H1 (cell line): ENCODE measurements at regions of chr15 and their contacts with region 1.

Region 1: DNA sequence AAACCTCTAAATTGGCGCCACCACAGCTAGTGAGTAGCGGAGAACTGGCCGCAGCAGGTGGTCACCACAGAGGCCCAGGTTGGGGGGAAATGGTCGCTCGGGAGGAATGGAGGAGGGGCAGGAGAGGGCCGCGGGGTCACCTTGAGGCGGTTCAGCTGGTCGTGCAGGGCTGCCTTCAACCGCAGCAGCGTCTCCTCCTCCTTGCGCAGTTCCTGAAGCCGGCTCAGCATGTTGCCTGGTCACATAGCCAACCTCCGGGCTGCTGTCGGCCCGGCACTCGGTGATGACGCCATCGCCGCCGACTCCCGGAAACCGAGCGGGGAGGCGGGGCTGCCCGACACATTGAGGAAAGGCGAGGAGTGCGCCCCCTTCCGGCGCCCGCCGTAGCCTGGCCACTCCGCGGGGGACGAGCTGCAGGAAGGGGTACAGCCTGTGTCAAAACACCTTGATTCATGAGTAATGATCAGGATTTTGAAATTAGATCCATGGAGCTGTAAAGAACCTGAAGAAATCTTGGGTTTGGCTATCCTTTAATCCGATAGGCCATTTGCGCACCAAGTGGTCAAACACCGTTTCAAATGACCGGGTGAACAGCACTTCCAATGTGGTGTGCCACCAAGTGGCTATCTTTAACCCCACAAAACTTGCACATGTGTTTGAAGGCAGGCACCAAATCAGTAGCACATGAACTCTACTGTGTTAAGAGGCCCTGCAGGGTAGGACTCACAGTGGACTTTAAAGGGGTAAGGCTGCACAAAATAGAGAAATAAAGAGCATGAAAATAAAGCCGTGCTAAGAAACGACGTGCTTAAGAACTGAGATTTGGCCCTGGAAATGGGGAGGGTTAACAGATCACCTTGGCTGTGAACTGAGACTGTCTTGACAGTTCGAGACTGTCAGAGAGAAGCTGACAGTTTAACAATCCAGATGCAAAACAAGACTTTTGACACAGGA is at the start of gene SNAPC5:
- DNase-seq: peak; percentile 94 to 100
- H3K4me3 ChIP-seq: peak within 1 kb of the TSS; percentile 56 to 88 (median 67)
- H3K27ac ChIP-seq: peak within 1 kb of the TSS; percentile 88
- H3K4me1 ChIP-seq: peaks cover 5 to 8% (median 6%) of the 10 kb centered on the region in 4 experiments; a peak in 5 of 7 replicates
- H3K27me3 ChIP-seq: no peaks in the 10 kb centered on the region
- CTCF ChIP-seq: peak; percentile 78 to 93 (median 90)
- EP300 ChIP-seq: no peak; a peak in 1 of 3 replicates
- POLR2A ChIP-seq: peak; percentile 57 to 91
- RAD21 ChIP-seq: peak; percentile 29 to 56; a peak in 3 of 4 replicates
- total RNA-seq, gene SNAPC5: 21.5 and 23.1 TPM in 2 replicates

Region 2: GRCh38 chr15:66261056-66261455 is 236.7 kb before region 1 on chr15:
- CTCF ChIA-PET with region 1: no interaction called
- POLR2A ChIA-PET with region 1: no interaction called
- DNase-seq: no peak
- H3K4me3 ChIP-seq: no peak overlapping the region
- H3K27ac ChIP-seq: no peak overlapping the region
- H3K4me1 ChIP-seq: no peaks in the 10 kb centered on the region
- H3K27me3 ChIP-seq: peaks cover 2 to 12% (median 11%) of the 10 kb centered on the region in 4 experiments
- CTCF ChIP-seq: no peak
- EP300 ChIP-seq: no peak
- POLR2A ChIP-seq: no peak
- RAD21 ChIP-seq: no peak

Region 3: GRCh38 chr15:66293419-66294156 is 204.2 kb before region 1 on chr15 and contains the start of gene DIS3L:
- CTCF ChIA-PET with region 1: interaction called, 5 read pairs
- POLR2A ChIA-PET with region 1: interaction called, 20 read pairs
- DNase-seq: peak in 1 of 2 experiments; percentile 80
- H3K4me3 ChIP-seq: peak within 1 kb of the TSS; percentile 54 to 73 (median 60)
- H3K27ac ChIP-seq: peak within 1 kb of the TSS; percentile 65; the same call in 1 of the 2 replicates
- H3K4me1 ChIP-seq: peaks cover 6 to 12% (median 7%) of the 10 kb centered on the region in 4 experiments; a peak in 6 of 7 replicates
- H3K27me3 ChIP-seq: no peaks in the 10 kb centered on the region
- CTCF ChIP-seq: no peak
- EP300 ChIP-seq: no peak
- POLR2A ChIP-seq: peak in 1 of 2 experiments; percentile 69
- RAD21 ChIP-seq: no peak
- total RNA-seq, gene DIS3L: 25.0 and 31.2 TPM in 2 replicates

Region 4: GRCh38 chr15:66386204-66387123 is 111.3 kb before region 1 on chr15 and contains the start of gene MAP2K1:
- CTCF ChIA-PET with region 1: interaction called, 30 read pairs
- POLR2A ChIA-PET with region 1: interaction called, 58 read pairs
- DNase-seq: peak; percentile 85 to 98
- H3K4me3 ChIP-seq: peak within 1 kb of the TSS; percentile 51 to 96 (median 88)
- H3K27ac ChIP-seq: 0 out of 2 replicates have a peak within 1 kb of the TSS, but pooled peaks have one; percentile 6
- H3K4me1 ChIP-seq: peaks cover 0 to 3% (median 0%) of the 10 kb centered on the region in 4 experiments; a peak in 2 of 7 replicates
- H3K27me3 ChIP-seq: no peaks in the 10 kb centered on the region
- CTCF ChIP-seq: peak; percentile 54 to 77 (median 71)
- EP300 ChIP-seq: no peak
- POLR2A ChIP-seq: peak in 1 of 2 experiments; percentile 54; a peak in 1 of 3 replicates
- RAD21 ChIP-seq: peak; percentile 29 to 41
- total RNA-seq, gene MAP2K1: 70.4 and 78.2 TPM in 2 replicates

Region 5: GRCh38 chr15:66401130-66402021 is 96.4 kb before region 1 on chr15:
- CTCF ChIA-PET with region 1: interaction called, 28 read pairs
- POLR2A ChIA-PET with region 1: interaction called, 64 read pairs
- DNase-seq: no peak
- H3K4me3 ChIP-seq: no peak overlapping the region
- H3K27ac ChIP-seq: no peak overlapping the region
- H3K4me1 ChIP-seq: peaks cover 1 to 18% (median 14%) of the 10 kb centered on the region in 4 experiments; a peak in 6 of 7 replicates
- H3K27me3 ChIP-seq: no peaks in the 10 kb centered on the region
- CTCF ChIP-seq: peak; percentile 17 to 57 (median 30); a peak in 2 of 4 replicates
- EP300 ChIP-seq: no peak
- POLR2A ChIP-seq: no peak
- RAD21 ChIP-seq: peak; percentile 44 to 47; a peak in 3 of 4 replicates

Region 6: GRCh38 chr15:66452420-66452819 is 45.4 kb before region 1 on chr15:
- CTCF ChIA-PET with region 1: interaction called, 18 read pairs
- POLR2A ChIA-PET with region 1: no interaction called
- DNase-seq: no peak
- H3K4me3 ChIP-seq: no peak overlapping the region
- H3K27ac ChIP-seq: no peak overlapping the region
- H3K4me1 ChIP-seq: no peaks in the 10 kb centered on the region
- H3K27me3 ChIP-seq: no peaks in the 10 kb centered on the region
- CTCF ChIP-seq: no peak
- EP300 ChIP-seq: no peak
- POLR2A ChIP-seq: no peak
- RAD21 ChIP-seq: no peak

Region 7: GRCh38 chr15:66483131-66483566 is 14.6 kb before region 1 on chr15:
- CTCF ChIA-PET with region 1: interaction called, 44 read pairs
- POLR2A ChIA-PET with region 1: interaction called, 56 read pairs
- DNase-seq: no peak
- H3K4me3 ChIP-seq: no peak overlapping the region
- H3K27ac ChIP-seq: no peak overlapping the region
- H3K4me1 ChIP-seq: no peaks in the 10 kb centered on the region
- H3K27me3 ChIP-seq: no peaks in the 10 kb centered on the region
- CTCF ChIP-seq: no peak
- EP300 ChIP-seq: no peak
- POLR2A ChIP-seq: no peak
- RAD21 ChIP-seq: no peak